ENCODE measurements at regions of chr15 and their contacts with region 1.

Region 1: DNA sequence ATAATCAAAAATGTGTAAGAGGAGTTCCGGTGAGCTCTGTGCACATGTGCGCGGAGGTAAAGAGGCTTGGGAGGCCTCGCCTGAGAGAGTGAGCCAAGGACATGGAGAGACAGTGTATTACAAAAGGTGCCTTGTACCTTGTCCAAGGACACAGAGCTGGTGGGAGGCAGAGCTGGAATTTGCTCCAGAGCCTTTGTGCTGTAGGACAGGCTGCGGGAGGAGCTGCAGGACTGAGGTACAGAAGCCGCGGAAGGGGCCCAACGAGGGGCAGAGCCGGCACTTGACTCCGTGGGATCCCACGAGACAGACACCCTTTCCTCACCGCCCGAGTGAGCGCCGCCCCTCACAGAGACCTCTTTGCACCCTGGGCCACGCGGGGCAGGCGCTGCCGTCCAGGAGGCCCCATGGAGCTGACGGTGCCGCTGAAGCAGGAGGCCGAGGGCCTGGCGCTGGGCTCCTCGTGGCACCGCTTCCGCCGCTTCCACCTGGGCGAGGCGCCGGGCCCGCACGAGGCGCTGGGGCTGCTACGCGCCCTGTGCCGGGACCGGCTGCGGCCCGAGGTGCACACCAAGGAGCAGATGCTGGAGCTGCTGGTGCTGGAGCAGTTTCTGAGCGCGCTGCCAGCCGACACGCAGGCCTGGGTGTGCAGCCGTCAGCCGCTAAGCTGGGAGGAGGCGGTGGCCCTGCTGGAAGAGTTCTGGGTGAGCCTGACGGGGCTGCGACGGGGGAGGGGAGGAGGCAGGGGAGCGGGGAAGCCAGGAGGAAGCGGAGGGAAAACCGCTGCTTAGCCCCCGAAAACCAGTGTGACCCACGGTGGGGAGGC is 68.7 kb downstream of the SLTM start:
- DNase-seq: peak; percentile 81
- H3K4me3 Mint-ChIP-seq: peak overlapping the region; percentile 72
- H3K27ac Mint-ChIP-seq: peak overlapping the region; percentile 93
- H3K4me1 Mint-ChIP-seq: peaks cover 41% of the 10 kb centered on the region
- H3K27me3 Mint-ChIP-seq: no peaks in the 10 kb centered on the region
- CTCF ChIP-seq: no peak

Region 2: GRCh38 chr15:58440158-58440910 is 424.5 kb before region 1 on chr15:
- CTCF ChIA-PET with region 1: no interaction called
- intact Hi-C with region 1: loop called (anchors 10 kb)
- DNase-seq: peak; percentile 68
- H3K4me3 Mint-ChIP-seq: peak overlapping the region; percentile 30
- H3K27ac Mint-ChIP-seq: peak overlapping the region; percentile 76
- H3K4me1 Mint-ChIP-seq: peaks cover 78% of the 10 kb centered on the region
- H3K27me3 Mint-ChIP-seq: no peaks in the 10 kb centered on the region
- CTCF ChIP-seq: no peak

Region 3: GRCh38 chr15:58852347-58852746 is 12.5 kb before region 1 on chr15:
- CTCF ChIA-PET with region 1: interaction called, 43 read pairs
- intact Hi-C with region 1: no loop called
- DNase-seq: no peak
- H3K4me3 Mint-ChIP-seq: no peak overlapping the region
- H3K27ac Mint-ChIP-seq: peak overlapping the region; percentile 28
- H3K4me1 Mint-ChIP-seq: peaks cover 19% of the 10 kb centered on the region
- H3K27me3 Mint-ChIP-seq: no peaks in the 10 kb centered on the region
- CTCF ChIP-seq: no peak

Region 4: GRCh38 chr15:58951388-58952007 is 86.7 kb after region 1 on chr15:
- CTCF ChIA-PET with region 1: no interaction called
- intact Hi-C with region 1: no loop called
- DNase-seq: peak; percentile 28
- H3K4me3 Mint-ChIP-seq: no peak overlapping the region
- H3K27ac Mint-ChIP-seq: peak overlapping the region; percentile 74
- H3K4me1 Mint-ChIP-seq: peaks cover 18% of the 10 kb centered on the region
- H3K27me3 Mint-ChIP-seq: no peaks in the 10 kb centered on the region
- CTCF ChIP-seq: no peak

Region 5: DNA sequence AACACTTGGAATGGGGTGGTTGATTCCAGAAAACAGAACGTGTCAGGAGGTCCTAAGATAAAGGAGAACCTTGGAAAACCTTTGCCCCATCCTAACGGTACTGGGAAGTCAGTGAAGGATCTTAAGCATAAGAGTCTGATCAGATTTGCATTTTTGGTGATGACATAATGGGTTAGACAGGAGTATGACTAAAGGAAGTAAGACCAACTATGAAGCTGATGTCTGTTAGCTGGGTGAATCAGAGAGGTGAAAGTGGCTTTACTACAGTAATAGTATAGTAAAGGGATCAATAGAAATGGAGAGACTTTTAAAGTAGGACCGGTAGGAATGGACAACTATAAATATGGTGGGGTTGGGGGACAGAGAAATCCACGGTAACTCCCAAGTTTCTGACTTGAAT is 779.9 kb after region 1 on chr15:
- CTCF ChIA-PET with region 1: no interaction called
- intact Hi-C with region 1: loop called (anchors 5 kb)
- DNase-seq: no peak
- H3K4me3 Mint-ChIP-seq: no peak overlapping the region
- H3K27ac Mint-ChIP-seq: no peak overlapping the region
- H3K4me1 Mint-ChIP-seq: no peaks in the 10 kb centered on the region
- H3K27me3 Mint-ChIP-seq: no peaks in the 10 kb centered on the region
- CTCF ChIP-seq: no peak